A549 (cell line): ENCODE measurements at regions of chr14 and their contacts with region 1.

Region 1: GRCh38 chr14:70086685-70087379 is 101.9 kb downstream of the SLC8A3 start:
- DNase-seq: peak in 1 of 2 experiments; percentile 65
- ATAC-seq: peak; percentile 59 to 79; a peak in 3 of 6 replicates
- H3K4me3 ChIP-seq: no peak overlapping the region
- H3K27ac ChIP-seq: no peak overlapping the region
- H3K4me1 ChIP-seq: no peaks in the 10 kb centered on the region
- CTCF ChIP-seq: peak; percentile 62
- EP300 ChIP-seq: no peak
- POLR2A ChIP-seq: no peak
- RAD21 ChIP-seq: peak; percentile 48 to 52; a peak in 4 of 5 replicates

Region 2: DNA sequence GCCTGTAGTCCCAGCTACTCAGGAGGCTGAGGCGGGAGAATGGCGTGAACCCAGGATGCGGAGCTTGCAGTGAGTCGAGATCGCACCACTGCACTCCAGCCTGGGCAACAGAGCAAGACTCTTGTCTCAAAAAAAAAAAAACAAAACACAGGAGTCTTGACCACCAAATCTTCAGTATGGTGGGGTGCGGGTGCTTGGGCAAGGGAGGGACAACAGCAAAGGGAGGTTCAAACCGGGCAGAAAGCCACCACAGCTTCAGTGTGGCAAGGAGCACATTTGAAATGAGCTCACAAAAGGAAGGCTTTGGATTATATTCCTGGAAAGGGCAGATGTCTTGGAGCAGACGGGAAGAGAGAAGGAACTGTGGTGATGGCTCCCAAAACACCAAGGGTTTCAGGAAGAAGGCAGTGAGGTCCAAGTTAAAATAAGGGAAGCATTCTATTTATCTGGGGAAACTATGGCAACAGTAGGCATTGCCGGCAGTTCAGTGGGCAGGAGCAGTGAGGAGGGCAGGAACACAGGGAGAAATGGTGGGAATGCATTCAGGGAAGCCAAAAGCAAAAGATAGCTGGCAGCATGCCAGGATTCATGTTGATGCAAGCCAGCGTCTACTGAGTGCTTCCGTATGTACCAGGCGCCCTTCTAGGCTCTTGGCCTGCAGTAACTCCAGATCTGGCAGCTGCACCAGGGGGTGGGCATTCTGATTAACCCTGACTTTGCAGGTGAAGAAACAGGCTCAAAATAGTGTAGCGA is 370.9 kb before region 1 on chr14:
- CTCF ChIA-PET with region 1: no interaction called
- POLR2A ChIA-PET with region 1: no interaction called
- DNase-seq: no peak
- ATAC-seq: 0 out of 6 replicates have a peak, but pooled peaks of 1 of the 2 experiments have one; percentile 16
- H3K4me3 ChIP-seq: no peak overlapping the region
- H3K27ac ChIP-seq: no peak overlapping the region
- H3K4me1 ChIP-seq: peaks cover 15% of the 10 kb centered on the region
- CTCF ChIP-seq: no peak
- EP300 ChIP-seq: no peak
- POLR2A ChIP-seq: no peak
- RAD21 ChIP-seq: no peak

Region 3: DNA sequence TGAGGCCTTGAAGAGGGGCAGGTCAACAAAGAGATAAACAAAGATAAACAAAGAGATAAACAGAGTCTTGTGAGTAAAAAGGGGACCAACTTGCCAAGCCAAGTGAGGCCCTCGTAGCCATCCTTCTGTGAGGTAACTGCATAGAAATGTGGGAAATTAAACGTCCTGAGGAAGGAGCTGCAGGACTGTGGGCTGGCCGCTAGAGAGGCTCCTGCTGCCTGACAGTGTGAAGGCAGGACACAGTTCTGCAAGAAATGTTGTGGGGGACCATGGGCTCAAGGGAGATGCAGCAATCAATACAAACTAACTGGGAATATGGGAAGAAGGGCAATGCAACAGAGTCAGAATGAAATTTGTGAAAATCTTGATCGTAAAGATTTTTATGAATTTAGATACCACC is 10.0 kb after region 1 on chr14:
- CTCF ChIA-PET with region 1: interaction called, 13 read pairs
- POLR2A ChIA-PET with region 1: no interaction called
- DNase-seq: peak; percentile 12 to 13
- ATAC-seq: peak; percentile 79 to 88; a peak in 4 of 6 replicates
- H3K4me3 ChIP-seq: no peak overlapping the region
- H3K27ac ChIP-seq: no peak overlapping the region
- H3K4me1 ChIP-seq: no peaks in the 10 kb centered on the region
- CTCF ChIP-seq: no peak
- EP300 ChIP-seq: no peak
- POLR2A ChIP-seq: no peak
- RAD21 ChIP-seq: 0 out of 5 replicates have a peak, but pooled peaks of 1 of the 2 experiments have one; percentile 18

Region 4: GRCh38 chr14:70317969-70318634 is 231.3 kb after region 1 on chr14:
- CTCF ChIA-PET with region 1: interaction called, 46 read pairs
- POLR2A ChIA-PET with region 1: no interaction called
- DNase-seq: peak; percentile 40 to 78
- ATAC-seq: peak; percentile 97
- H3K4me3 ChIP-seq: peak overlapping the region; percentile 8; the same call in 1 of the 3 replicates
- H3K27ac ChIP-seq: 0 out of 6 replicates have a peak overlapping the region, but pooled peaks of 1 of the 2 experiments have one; percentile 11
- H3K4me1 ChIP-seq: peaks cover 16% of the 10 kb centered on the region; the same call in 2 of the 3 replicates
- CTCF ChIP-seq: peak; percentile 83
- EP300 ChIP-seq: no peak
- POLR2A ChIP-seq: no peak
- RAD21 ChIP-seq: peak; percentile 78 to 92